Aorta (tissue), 5 donors: ENCODE measurements at regions of chr18 and their contacts with region 1.

Region 1: GRCh38 chr18:21444465-21445023 is 156.0 kb downstream of the ESCO1 start:
- DNase-seq: no peak
- ATAC-seq: peak; percentile 71
- H3K4me3 ChIP-seq: no peak overlapping the region
- H3K27ac ChIP-seq: no peak overlapping the region
- H3K4me1 ChIP-seq: no peaks in the 10 kb centered on the region
- H3K27me3 ChIP-seq: no peaks in the 10 kb centered on the region

Region 2: DNA sequence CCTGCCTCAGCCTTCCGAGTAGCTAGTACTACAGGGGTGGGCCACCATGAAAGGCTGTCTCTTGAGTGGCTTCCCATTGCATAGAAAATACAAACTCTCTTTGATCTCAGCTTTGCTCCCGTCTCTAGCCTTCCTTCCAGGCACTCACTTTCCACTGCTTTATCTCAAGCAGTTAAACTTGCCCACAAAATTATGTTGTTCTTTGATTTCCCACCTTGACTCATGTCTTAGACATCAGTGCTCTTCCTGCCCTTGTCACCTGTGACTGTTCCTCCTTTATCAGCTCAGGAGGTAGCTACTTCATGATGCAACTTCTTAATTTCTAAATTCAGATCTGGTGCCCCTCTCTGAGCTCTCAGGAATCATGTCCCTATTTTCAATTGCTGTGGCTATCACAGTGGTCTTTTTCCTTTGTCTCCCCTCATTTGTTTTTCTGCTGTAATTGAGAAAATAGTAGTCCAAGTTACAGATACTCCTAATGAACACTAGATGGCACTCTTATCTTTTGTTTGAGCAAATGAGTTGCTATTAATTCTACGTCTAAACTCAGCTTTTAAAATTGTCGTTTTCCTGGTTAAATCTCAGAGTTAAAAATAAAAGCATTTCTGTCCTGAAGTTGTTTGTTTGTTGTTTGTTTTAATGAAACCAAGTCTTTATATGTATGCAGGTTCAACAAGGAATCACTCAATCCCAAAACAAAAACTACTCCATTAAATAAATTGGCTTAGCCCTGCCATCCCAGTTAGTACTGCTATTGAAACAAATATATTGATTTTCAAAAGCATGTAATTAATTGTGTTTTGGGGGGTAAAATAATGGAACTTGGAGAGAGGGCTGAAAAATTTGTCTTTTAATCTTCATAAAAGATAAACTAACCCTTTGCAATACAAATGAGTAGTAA is 249.4 kb before region 1 on chr18:
- intact Hi-C with region 1: loop called (anchors 2 kb)
- DNase-seq: no peak
- ATAC-seq: no peak
- H3K4me3 ChIP-seq: no peak overlapping the region
- H3K27ac ChIP-seq: no peak overlapping the region
- H3K4me1 ChIP-seq: no peaks in the 10 kb centered on the region
- H3K27me3 ChIP-seq: no peaks in the 10 kb centered on the region

Region 3: GRCh38 chr18:21918693-21919092 is 474.1 kb after region 1 on chr18:
- intact Hi-C with region 1: no loop called
- DNase-seq: no peak
- ATAC-seq: no peak
- H3K4me3 ChIP-seq: no peak overlapping the region
- H3K27ac ChIP-seq: no peak overlapping the region
- H3K4me1 ChIP-seq: no peaks in the 10 kb centered on the region
- H3K27me3 ChIP-seq: no peaks in the 10 kb centered on the region